Tibial artery (tissue), 4 donors: ENCODE measurements at regions of chr4 and their contacts with region 1.

Region 1: DNA sequence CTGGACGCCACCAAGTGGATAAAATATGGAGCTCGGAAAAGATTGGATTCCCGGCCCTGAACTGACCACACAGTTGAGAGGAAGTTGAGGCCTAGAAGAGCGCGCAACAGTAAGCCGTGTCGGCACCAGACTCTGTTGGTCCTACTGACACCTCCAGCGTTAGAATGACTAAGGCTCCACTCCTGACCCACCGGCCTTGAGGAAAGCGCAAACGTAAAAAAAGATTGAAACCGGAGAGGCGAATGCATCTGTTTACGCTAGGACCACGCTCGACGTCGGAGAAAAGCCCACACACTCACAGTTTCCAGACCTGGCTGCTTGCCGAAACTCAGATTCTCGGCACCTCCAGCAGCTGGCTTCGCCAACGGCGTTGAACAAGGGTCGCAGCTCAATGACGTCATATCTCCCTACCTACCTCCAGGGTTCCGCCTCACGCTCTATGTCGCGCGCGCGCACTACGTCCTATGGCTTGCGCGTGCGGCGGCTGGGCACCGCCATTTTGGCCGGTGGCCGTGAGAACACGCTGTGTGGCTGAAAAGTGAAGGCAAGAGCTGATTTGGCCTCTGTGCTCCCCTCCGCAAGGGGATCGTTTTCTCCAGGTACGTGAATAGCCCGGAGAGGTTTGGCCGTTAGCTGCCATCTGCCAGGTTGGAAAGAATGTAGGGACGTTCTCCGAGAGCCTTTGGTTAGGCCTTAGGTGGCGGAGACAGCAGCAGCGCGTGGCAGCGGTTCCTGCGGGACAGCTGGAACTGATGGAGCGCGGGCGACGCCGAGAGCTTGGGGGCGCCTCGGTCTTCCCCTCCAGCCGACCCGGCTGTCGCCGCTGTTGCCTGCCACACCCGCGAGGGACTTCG is at the starts of genes ABCE1 and ANAPC10:
- DNase-seq: peak; percentile 96
- H3K4me3 ChIP-seq: peak within 1 kb of the TSS; percentile 64 to 75
- H3K27ac ChIP-seq: peak within 1 kb of the TSS; percentile 89
- H3K4me1 ChIP-seq: peaks cover 0 to 62% (median 17%) of the 10 kb centered on the region in 4 donors
- H3K27me3 ChIP-seq: no peaks in the 10 kb centered on the region
- CTCF ChIP-seq: no peak

Region 2: GRCh38 chr4:143558823-143559756 is 1539.0 kb before region 1 on chr4:
- intact Hi-C with region 1: loop called (anchors 5 kb)
- DNase-seq: peak; percentile 44 to 79
- H3K4me3 ChIP-seq: peak overlapping the region; percentile 56 to 67
- H3K27ac ChIP-seq: peak overlapping the region; percentile 64 to 66
- H3K4me1 ChIP-seq: peaks cover 0 to 11% (median 0%) of the 10 kb centered on the region in 4 donors
- H3K27me3 ChIP-seq: no peaks in the 10 kb centered on the region
- CTCF ChIP-seq: peak; percentile 44 to 52

Region 3: GRCh38 chr4:144831971-144832370 is 266.1 kb before region 1 on chr4:
- intact Hi-C with region 1: no loop called
- DNase-seq: no peak
- H3K4me3 ChIP-seq: no peak overlapping the region
- H3K27ac ChIP-seq: no peak overlapping the region
- H3K4me1 ChIP-seq: no peaks in the 10 kb centered on the region
- H3K27me3 ChIP-seq: no peaks in the 10 kb centered on the region
- CTCF ChIP-seq: no peak

Region 4: GRCh38 chr4:145180298-145181090 is 82.4 kb after region 1 on chr4 and contains the start of gene OTUD4:
- intact Hi-C with region 1: loop called (anchors 10 kb)
- DNase-seq: peak; percentile 95 to 97
- H3K4me3 ChIP-seq: peak within 1 kb of the TSS; percentile 84 to 98
- H3K27ac ChIP-seq: peak within 1 kb of the TSS; percentile 97 to 98
- H3K4me1 ChIP-seq: peaks cover 0 to 40% (median 21%) of the 10 kb centered on the region in 4 donors
- H3K27me3 ChIP-seq: no peaks in the 10 kb centered on the region
- CTCF ChIP-seq: no peak